Gastrocnemius medialis (tissue), 4 donors: ENCODE measurements at regions of chr9 and their contacts with region 1.

Region 1: DNA sequence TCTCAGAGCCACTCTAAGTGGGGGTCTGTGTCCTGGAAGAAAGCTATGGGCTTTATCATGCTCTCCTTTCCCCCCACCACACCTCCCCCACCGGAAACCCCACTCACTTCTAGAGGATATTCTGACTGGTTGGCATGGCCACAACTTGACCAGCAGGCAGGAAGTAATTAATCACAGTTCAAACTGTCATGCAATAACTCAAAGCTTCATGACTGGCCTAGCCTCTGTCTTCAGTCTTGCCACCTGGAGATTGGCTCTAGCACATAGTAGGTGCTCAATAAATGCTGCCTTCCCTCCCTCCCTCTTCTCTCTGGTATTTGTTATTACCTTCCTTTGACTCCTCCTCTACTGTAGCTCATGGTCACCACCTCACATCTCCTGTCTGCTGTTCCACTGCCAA is 124.7 kb downstream of the GABBR2 start:
- DNase-seq: no peak
- ATAC-seq: no peak
- H3K4me3 ChIP-seq: no peak overlapping the region
- H3K27ac ChIP-seq: no peak overlapping the region
- H3K4me1 ChIP-seq: no peaks in the 10 kb centered on the region
- H3K27me3 ChIP-seq: peaks cover 0 to 4% (median 0%) of the 10 kb centered on the region in 3 donors
- CTCF ChIP-seq: no peak
- POLR2A ChIP-seq: no peak

Region 2: GRCh38 chr9:98523231-98523896 is 60.7 kb before region 1 on chr9:
- in situ Hi-C with region 1: loop called in 1 of 4 experiments (anchors 10 kb)
- intact Hi-C with region 1: no loop called
- DNase-seq: no peak
- ATAC-seq: no peak
- H3K4me3 ChIP-seq: no peak overlapping the region
- H3K27ac ChIP-seq: no peak overlapping the region
- H3K4me1 ChIP-seq: no peaks in the 10 kb centered on the region
- H3K27me3 ChIP-seq: peaks cover 0 to 3% (median 0%) of the 10 kb centered on the region in 3 donors
- CTCF ChIP-seq: no peak
- POLR2A ChIP-seq: no peak

Region 3: DNA sequence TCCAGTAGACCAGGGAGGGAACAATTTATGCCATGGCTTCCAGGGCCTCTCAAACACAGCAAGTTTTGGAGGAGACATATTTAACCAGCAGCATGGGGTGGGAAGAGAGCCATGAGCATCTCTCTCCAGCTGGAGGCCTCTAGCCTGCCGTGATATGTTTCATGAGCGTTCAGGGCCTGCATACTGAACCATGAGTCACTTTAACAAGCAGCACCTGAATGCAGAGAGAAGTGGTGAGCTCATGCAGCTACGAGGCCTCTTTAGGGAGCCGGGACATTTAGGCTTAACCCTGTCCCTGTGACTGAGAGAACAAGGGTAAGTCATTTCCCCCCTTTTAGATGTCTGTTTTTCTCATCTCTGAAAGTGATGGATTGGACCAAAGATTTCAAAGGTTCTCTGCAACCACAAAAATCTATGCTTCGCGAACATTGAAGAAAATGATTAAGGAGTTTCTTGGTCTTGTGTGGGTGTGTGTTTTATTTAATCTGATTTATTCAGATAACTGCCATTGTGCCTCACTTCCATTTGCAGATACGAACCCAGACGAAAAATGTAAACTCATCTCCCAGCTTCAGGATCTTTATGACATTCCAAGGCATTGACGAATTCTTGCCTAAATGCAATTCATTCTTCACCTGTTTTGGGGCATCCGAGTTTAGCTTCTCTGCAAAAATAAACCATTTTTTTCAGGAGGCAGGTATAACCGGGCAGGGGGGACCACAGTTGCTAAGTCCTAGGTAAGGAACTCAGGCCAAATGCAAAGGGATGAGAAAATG is 32.4 kb before region 1 on chr9:
- in situ Hi-C with region 1: no loop called
- intact Hi-C with region 1: no loop called
- DNase-seq: no peak
- ATAC-seq: no peak
- H3K4me3 ChIP-seq: no peak overlapping the region
- H3K27ac ChIP-seq: no peak overlapping the region
- H3K4me1 ChIP-seq: no peaks in the 10 kb centered on the region
- H3K27me3 ChIP-seq: no peaks in the 10 kb centered on the region
- CTCF ChIP-seq: no peak
- POLR2A ChIP-seq: no peak

Region 4: DNA sequence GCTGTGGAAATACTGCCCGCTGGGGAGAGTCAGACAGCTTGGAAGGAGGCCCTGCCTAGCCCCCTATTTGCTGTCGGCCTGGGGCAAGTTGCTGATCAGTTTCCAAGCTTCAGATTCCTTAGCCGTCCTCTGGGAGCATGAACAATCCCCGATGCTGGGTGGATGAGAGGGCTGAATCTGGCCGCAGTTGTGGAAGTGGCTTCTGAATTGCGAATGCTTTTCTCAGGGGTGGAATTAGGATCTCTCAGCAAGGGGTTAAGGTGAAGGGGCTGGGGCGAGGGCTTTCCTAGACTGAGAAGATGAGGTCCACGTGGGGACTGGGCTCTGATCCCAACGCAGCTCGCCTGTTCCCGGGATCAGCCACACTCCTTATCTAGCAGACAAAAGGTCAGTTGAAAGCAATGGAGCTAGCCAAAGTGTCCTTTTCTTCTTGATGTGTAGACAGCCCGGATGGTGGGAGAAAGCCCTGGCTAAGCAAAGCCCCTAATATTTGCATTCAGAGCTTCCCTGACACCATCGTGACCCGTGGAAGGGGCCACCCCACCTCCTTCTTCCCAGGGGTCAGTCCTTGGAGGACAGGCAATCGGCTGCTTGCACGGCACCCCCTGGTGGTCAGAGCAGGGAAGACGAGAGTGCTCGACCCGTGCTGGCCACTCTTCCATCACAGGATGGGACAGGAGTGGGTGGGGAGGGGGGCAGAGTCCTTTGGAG is 414.5 kb after region 1 on chr9:
- in situ Hi-C with region 1: no loop called
- intact Hi-C with region 1: no loop called
- DNase-seq: peak; percentile 41 to 68
- ATAC-seq: peak; percentile 68 to 76
- H3K4me3 ChIP-seq: peak overlapping the region in 2 of 4 donors; percentile 0 to 7
- H3K27ac ChIP-seq: peak overlapping the region; percentile 43 to 61 (median 54)
- H3K4me1 ChIP-seq: peaks cover 3 to 10% of the 10 kb centered on the region in 2 donors
- H3K27me3 ChIP-seq: no peaks in the 10 kb centered on the region
- CTCF ChIP-seq: peak; percentile 74 to 87 (median 85)
- POLR2A ChIP-seq: no peak